ENCODE measurements at regions of chr18 and their contacts with region 1.

Region 1: DNA sequence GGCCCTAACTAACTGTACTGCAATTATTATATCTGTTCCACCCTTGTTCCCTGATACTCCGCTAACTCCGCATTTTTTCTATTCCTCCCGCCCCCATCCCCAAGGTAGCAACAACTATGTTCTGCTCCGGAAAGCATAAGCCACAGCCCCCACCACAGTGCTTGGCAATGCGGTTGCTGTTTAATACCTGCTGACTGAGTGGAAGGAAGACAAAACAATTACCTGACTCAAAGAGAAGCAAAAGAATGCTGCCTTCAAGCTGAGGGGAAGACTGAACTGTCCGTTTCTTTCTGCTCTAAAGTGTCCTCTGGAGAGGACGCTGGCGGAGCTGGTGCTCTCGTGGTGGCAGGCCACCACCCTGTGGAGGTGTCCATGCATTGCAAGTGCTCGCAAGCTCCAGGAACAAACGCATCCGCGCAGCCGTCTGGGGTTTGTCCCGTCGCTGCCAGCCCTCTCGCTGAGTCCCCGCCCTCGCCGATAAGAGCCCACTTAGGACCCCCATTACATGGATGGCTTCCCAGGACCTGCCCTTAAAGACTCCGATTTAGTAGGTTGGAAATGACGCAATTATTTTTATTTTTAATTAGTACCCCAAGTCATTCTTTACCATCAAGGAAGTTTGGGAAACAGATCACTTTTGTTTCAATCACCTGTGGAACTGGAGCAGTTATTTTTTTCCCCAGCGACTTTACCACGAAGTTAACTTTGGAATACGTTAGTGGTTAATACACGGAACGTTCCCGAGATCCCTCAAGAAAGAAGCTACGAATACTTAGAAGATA is 1.6 kb upstream of the MYL12A start:
- DNase-seq: peak; percentile 93
- ATAC-seq: peak; percentile 81

Region 2: DNA sequence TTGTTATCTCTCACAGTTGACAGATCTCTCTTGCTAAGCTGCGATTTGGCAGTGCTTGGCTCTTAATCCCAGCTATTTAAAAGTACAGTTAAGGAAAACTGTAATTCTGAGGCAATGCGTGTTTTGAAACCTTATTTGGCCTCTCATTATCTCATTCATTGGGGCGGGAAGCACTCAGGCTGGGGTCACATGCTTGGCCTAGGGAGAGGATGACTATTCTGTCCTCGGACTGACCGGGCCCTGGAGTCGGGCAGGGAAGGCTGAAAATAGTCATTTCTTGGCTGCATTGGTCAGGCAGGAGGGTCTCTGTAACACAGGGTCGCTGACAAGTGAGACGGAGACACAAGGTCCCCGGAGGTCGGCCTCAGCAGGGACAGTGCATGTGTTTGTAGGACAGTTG is 419.5 kb before region 1 on chr18:
- intact Hi-C with region 1: no loop called
- DNase-seq: peak; percentile 56
- ATAC-seq: peak; percentile 83

Region 3: DNA sequence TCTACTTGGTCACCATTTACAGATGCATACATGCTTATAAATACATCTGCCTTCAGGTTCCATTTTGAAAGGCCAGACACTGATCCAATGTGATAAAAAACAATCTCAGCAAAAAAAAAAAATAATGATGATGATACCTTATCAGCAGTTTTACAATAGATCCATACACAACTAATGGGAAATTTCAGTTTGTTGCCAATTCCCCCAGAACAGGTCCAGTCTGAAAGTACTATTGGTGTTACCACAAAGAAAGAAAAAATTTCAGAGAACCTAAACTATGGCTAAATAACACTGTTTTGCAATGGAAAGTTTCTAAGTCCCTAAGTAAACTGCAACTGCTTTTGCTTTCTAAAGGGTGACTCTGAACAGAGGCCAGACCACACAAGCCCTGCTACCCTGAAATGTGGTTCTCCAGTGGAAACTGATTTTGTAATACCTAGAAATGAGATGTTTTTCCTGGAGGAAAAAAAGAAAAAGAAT is 287.2 kb before region 1 on chr18:
- intact Hi-C with region 1: no loop called
- DNase-seq: no peak
- ATAC-seq: peak; percentile 64

Region 4: GRCh38 chr18:3148930-3149535 is 97.0 kb before region 1 on chr18:
- intact Hi-C with region 1: loop called (anchors 10 kb)
- DNase-seq: no peak
- ATAC-seq: no peak

Region 5: DNA sequence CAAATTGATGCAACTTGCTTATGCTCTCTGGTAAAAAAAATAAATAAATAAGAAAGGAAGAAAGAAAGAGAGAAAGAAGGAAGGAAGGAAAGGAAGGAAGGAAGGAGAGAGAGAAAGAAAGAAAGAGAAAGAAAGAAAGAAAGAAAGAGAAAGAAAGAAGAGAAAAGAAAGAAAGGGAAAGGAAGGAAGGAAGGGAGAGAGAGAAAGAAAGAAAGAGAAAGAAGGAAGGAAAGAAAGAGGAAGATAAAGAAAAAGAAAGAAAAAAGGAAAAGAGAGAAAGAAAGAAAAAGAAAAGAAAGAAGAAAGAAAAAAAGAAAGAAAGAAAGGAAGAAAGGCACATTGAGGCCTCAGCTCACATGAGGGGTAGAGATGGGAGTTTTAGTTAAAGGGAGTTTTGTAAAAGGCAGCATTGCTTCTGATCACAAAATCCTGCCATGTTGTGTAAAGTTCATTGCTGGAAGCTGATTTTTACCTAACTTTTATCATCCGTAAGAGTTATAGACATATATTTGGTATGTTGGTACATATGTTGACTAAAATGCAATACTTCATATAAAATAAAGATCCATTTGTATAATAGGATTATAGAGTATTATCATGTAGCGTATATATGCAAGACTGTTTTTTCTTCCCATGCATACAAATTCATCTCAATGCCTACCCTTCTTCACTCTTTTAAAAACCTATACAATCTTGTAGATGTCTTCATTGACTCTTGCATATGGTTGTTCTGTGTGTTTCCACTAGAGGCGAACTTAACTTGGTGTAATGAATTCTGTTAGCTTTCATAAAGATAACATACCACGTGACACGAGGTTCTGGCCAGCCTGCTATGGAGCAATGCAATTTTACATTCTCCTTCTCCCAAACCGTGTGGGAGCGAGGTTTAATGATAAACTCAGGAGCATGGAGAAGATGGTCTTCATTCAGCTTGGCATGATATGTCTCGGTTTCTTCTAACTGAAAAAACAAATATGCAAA is 59.1 kb before region 1 on chr18:
- intact Hi-C with region 1: loop called (anchors 5 kb)
- DNase-seq: no peak
- ATAC-seq: peak; percentile 50

Region 6: GRCh38 chr18:3199942-3200645 is 46.0 kb before region 1 on chr18:
- intact Hi-C with region 1: no loop called
- DNase-seq: no peak
- ATAC-seq: no peak

Region 7: DNA sequence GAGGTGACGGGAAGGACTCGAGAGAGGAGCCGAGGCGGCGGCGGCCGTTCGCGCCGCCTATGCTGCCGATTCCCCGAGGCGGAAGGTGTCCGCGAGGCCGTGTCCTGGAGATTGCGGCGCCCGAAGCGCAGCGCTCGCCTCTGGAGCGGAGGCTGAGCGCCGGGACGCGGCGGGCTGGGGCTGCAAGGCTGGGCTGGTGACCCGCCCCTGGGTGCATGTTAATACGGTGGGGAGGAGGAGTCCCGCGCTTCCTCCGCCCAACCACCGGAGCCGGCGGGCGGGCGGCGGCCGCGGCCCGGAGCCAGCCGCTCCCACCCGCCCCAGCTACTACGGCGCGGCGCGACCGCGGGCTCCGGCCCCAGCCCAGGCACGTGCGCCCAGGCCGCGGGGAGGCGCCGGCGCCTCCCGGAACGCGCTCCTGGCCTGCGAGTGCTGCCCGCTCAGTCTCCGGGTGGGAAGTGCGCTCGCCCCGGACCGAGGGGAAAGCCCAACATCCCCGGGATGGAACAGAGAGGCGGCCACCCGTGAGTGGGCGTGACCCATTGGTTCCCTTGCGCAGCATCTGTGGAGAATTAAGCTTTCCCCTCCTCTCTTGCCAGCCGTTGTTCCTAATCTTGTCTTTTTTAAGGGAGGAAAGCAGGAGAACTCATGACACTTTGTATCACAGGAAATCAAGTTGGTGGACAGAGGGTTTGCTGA is 1209.2 kb after region 1 on chr18 and contains the start of gene DLGAP1:
- intact Hi-C with region 1: no loop called
- DNase-seq: peak; percentile 37
- ATAC-seq: peak; percentile 36
- total RNA-seq, gene DLGAP1: 0.08 TPM